CD4-positive, alpha-beta T cell (primary cell): ENCODE measurements at regions of chr18 and their contacts with region 1.

Region 1: GRCh38 chr18:13124411-13124810 is 94.1 kb upstream of the LDLRAD4 start:
- DNase-seq: no peak
- ATAC-seq: no peak
- H3K4me3 ChIP-seq: no peak overlapping the region
- H3K4me3 Mint-ChIP-seq: no peak overlapping the region
- H3K27ac ChIP-seq: no peak overlapping the region
- H3K27ac Mint-ChIP-seq: peak overlapping the region; percentile 24
- H3K4me1 ChIP-seq: no peaks in the 10 kb centered on the region
- H3K4me1 Mint-ChIP-seq: no peaks in the 10 kb centered on the region
- H3K27me3 ChIP-seq: no peaks in the 10 kb centered on the region
- H3K27me3 Mint-ChIP-seq: no peaks in the 10 kb centered on the region
- CTCF ChIP-seq: no peak

Region 2: GRCh38 chr18:13137670-13138419 is 13.4 kb after region 1 on chr18:
- CTCF ChIA-PET with region 1: interaction called, 3 read pairs
- POLR2A ChIA-PET with region 1: interaction called, 16 read pairs
- intact Hi-C with region 1: no loop called
- DNase-seq: peak; percentile 37 to 93 (median 58)
- ATAC-seq: peak; percentile 76
- H3K4me3 ChIP-seq: peak overlapping the region; percentile 72
- H3K4me3 Mint-ChIP-seq: peak overlapping the region; percentile 98
- H3K27ac ChIP-seq: peak overlapping the region; percentile 48 to 50
- H3K27ac Mint-ChIP-seq: peak overlapping the region; percentile 92
- H3K4me1 ChIP-seq: peaks cover 27% of the 10 kb centered on the region
- H3K4me1 Mint-ChIP-seq: peaks cover 32% of the 10 kb centered on the region
- H3K27me3 ChIP-seq: no peaks in the 10 kb centered on the region
- H3K27me3 Mint-ChIP-seq: no peaks in the 10 kb centered on the region
- CTCF ChIP-seq: no peak